ENCODE measurements at regions of chr2 and their contacts with region 1.

Region 1: DNA sequence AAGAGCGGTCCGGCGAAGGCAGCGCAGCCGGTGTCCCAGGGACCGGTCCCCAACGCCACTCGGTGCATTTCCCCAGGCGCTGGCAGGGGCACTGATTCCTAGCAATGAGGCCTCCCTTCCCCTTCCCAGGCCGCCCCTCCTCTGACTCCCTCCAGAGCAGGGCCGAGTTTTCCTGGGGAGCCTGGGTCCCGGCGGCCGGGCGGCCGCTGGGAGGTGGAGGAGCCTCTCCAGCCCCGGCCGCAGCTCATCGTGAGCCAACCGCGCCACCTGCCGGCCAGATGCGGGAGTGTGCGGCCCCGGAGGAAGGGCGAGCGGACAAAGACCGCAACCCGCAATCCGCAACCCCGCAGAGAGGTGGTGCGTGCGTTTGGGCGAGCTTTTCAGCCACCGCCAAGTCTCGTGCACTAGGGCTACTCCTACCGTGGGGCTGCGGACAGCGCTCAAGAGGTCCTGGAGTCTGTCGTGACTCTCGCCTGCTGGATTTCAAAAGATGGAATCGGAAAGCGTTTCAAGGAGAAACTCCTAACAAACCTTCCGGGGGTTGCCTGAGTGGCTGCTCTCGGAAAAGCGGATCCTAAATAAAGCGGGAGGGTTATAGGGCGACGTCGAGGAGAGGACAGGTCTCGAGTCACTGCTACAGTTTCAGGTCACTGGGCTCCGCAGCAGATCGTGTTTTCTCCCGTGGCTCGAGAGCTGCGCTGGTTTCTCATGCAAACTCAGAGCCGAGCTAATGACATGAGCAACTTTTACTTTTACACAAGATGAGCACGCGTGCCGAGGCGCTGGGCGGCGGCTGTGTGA is 1.5 kb upstream of the EPHA4 start:
- DNase-seq: peak; percentile 88
- ATAC-seq: peak; percentile 42
- H3K4me3 Mint-ChIP-seq: peak overlapping the region; percentile 89
- H3K27ac Mint-ChIP-seq: peak overlapping the region; percentile 31
- H3K4me1 Mint-ChIP-seq: peaks cover 41% of the 10 kb centered on the region
- H3K27me3 Mint-ChIP-seq: peaks cover 22% of the 10 kb centered on the region
- CTCF ChIP-seq: peak; percentile 89

Region 2: GRCh38 chr2:220687231-220687843 is 886.3 kb before region 1 on chr2:
- CTCF ChIA-PET with region 1: interaction called, 21 read pairs
- POLR2A ChIA-PET with region 1: no interaction called
- intact Hi-C with region 1: loop called (anchors 1 kb)
- DNase-seq: peak; percentile 31
- ATAC-seq: peak; percentile 97
- H3K4me3 Mint-ChIP-seq: no peak overlapping the region
- H3K27ac Mint-ChIP-seq: no peak overlapping the region
- H3K4me1 Mint-ChIP-seq: peaks cover 13% of the 10 kb centered on the region
- H3K27me3 Mint-ChIP-seq: peaks cover 8% of the 10 kb centered on the region
- CTCF ChIP-seq: peak; percentile 61

Region 3: DNA sequence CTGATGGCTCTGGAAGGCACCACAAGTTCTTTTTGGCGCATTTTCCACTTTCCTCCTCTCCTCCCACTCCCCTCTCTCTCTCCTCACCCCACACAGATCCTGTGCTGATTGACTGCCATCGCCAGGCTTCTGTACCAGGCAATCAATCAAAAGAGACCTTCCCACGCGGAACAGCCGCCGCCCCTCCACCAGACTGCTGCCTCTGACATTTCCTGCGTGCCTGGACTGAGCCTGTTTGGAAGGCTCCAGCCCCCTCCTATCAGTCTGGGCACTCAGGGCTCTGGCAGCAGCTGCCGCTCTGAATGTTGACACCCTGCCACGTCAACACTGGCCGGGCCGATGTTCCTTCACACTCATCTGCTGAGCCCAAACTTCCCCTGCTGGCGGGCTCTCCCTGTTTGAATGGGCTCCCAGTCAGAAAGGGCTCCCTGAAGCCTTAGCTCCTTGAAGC is 469.2 kb before region 1 on chr2:
- CTCF ChIA-PET with region 1: no interaction called
- POLR2A ChIA-PET with region 1: no interaction called
- intact Hi-C with region 1: loop called (anchors 5 kb)
- DNase-seq: no peak
- ATAC-seq: no peak
- H3K4me3 Mint-ChIP-seq: peak overlapping the region; percentile 33
- H3K27ac Mint-ChIP-seq: no peak overlapping the region
- H3K4me1 Mint-ChIP-seq: peaks cover 14% of the 10 kb centered on the region
- H3K27me3 Mint-ChIP-seq: peaks cover 10% of the 10 kb centered on the region
- CTCF ChIP-seq: no peak

Region 4: GRCh38 chr2:221289389-221289788 is 284.2 kb before region 1 on chr2:
- CTCF ChIA-PET with region 1: no interaction called
- POLR2A ChIA-PET with region 1: no interaction called
- intact Hi-C with region 1: loop called (anchors 5 kb)
- DNase-seq: no peak
- ATAC-seq: peak; percentile 42
- H3K4me3 Mint-ChIP-seq: no peak overlapping the region
- H3K27ac Mint-ChIP-seq: no peak overlapping the region
- H3K4me1 Mint-ChIP-seq: peaks cover 5% of the 10 kb centered on the region
- H3K27me3 Mint-ChIP-seq: no peaks in the 10 kb centered on the region
- CTCF ChIP-seq: no peak

Region 5: GRCh38 chr2:221517696-221518151 is 55.9 kb before region 1 on chr2:
- CTCF ChIA-PET with region 1: interaction called, 3 read pairs
- POLR2A ChIA-PET with region 1: interaction called, 12 read pairs
- intact Hi-C with region 1: loop called (anchors 1 kb)
- DNase-seq: peak; percentile 32
- ATAC-seq: peak; percentile 76
- H3K4me3 Mint-ChIP-seq: no peak overlapping the region
- H3K27ac Mint-ChIP-seq: no peak overlapping the region
- H3K4me1 Mint-ChIP-seq: peaks cover 14% of the 10 kb centered on the region
- H3K27me3 Mint-ChIP-seq: no peaks in the 10 kb centered on the region
- CTCF ChIP-seq: no peak

Region 6: GRCh38 chr2:222655787-222656525 is 1082.3 kb after region 1 on chr2 and contains the start of gene FARSB:
- CTCF ChIA-PET with region 1: no interaction called
- POLR2A ChIA-PET with region 1: no interaction called
- intact Hi-C with region 1: loop called (anchors 5 kb)
- DNase-seq: peak; percentile 81
- ATAC-seq: peak; percentile 93
- H3K4me3 Mint-ChIP-seq: peak within 1 kb of the TSS; percentile 97
- H3K27ac Mint-ChIP-seq: peak within 1 kb of the TSS; percentile 99
- H3K4me1 Mint-ChIP-seq: peaks cover 47% of the 10 kb centered on the region
- H3K27me3 Mint-ChIP-seq: no peaks in the 10 kb centered on the region
- CTCF ChIP-seq: no peak
- total RNA-seq, gene FARSB: 21.6 and 23.3 TPM in 2 replicates